Naive thymus-derived CD4-positive, alpha-beta T cell (primary cell): ENCODE measurements at regions of chr2 and their contacts with region 1.

Region 1: GRCh38 chr2:136135921-136136906 is 18.3 kb upstream of the CXCR4 start:
- DNase-seq: peak; percentile 32 to 98 (median 95)
- ATAC-seq: peak; percentile 76
- H3K4me3 ChIP-seq: peak overlapping the region; percentile 15
- H3K4me3 Mint-ChIP-seq: peak overlapping the region; percentile 52 to 92 (median 81)
- H3K27ac ChIP-seq: peak overlapping the region; percentile 99
- H3K27ac Mint-ChIP-seq: peak overlapping the region; percentile 82 to 100 (median 99)
- H3K4me1 ChIP-seq: peaks cover 86 to 87% of the 10 kb centered on the region in 2 donors
- H3K4me1 Mint-ChIP-seq: peaks cover 70 to 100% (median 94%) of the 10 kb centered on the region in 7 donors
- H3K27me3 ChIP-seq: no peaks in the 10 kb centered on the region
- H3K27me3 Mint-ChIP-seq: peaks cover 0 to 50% (median 0%) of the 10 kb centered on the region in 5 donors

Region 2: DNA sequence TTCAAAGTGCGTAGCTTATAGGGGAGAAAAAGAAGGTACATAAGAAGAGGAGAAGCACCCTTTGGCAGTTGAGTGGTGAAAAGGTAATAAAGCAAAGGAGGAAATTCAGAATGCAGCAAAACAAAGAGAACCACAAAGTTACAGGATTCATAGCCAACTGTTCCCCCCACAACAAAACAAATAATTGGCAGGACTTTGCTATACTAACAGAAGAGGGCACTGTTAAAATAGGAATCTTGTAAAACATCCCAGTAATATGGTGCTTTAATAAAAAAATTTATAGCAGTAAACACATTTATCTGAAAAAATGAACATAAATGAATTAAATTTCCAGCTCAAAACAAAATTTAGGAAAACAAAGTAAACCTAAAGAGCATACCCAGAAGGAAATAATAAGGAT is 562.6 kb before region 1 on chr2:
- CTCF ChIA-PET with region 1: no interaction called
- POLR2A ChIA-PET with region 1: no interaction called
- intact Hi-C with region 1: no loop called
- DNase-seq: no peak
- ATAC-seq: no peak
- H3K4me3 ChIP-seq: no peak overlapping the region
- H3K4me3 Mint-ChIP-seq: no peak overlapping the region
- H3K27ac ChIP-seq: no peak overlapping the region
- H3K27ac Mint-ChIP-seq: no peak overlapping the region
- H3K4me1 ChIP-seq: no peaks in the 10 kb centered on the region
- H3K4me1 Mint-ChIP-seq: peaks cover 0 to 9% (median 6%) of the 10 kb centered on the region in 7 donors
- H3K27me3 ChIP-seq: no peaks in the 10 kb centered on the region
- H3K27me3 Mint-ChIP-seq: no peaks in the 10 kb centered on the region

Region 3: GRCh38 chr2:135741395-135742324 is 394.6 kb before region 1 on chr2 and contains the start of gene UBXN4:
- CTCF ChIA-PET with region 1: no interaction called
- POLR2A ChIA-PET with region 1: no interaction called
- intact Hi-C with region 1: loop called (anchors 5 kb)
- DNase-seq: peak; percentile 73 to 93 (median 88)
- ATAC-seq: peak; percentile 95
- H3K4me3 ChIP-seq: peak within 1 kb of the TSS; percentile 88
- H3K4me3 Mint-ChIP-seq: peak within 1 kb of the TSS; percentile 92 to 98 (median 95)
- H3K27ac ChIP-seq: peak within 1 kb of the TSS; percentile 97
- H3K27ac Mint-ChIP-seq: peak within 1 kb of the TSS; percentile 89 to 99 (median 95)
- H3K4me1 ChIP-seq: peaks cover 20 to 22% of the 10 kb centered on the region in 2 donors
- H3K4me1 Mint-ChIP-seq: peaks cover 24 to 47% (median 43%) of the 10 kb centered on the region in 7 donors
- H3K27me3 ChIP-seq: no peaks in the 10 kb centered on the region
- H3K27me3 Mint-ChIP-seq: no peaks in the 10 kb centered on the region
- total RNA-seq, gene UBXN4: 115 to 158 (median 145) TPM

Region 4: GRCh38 chr2:136059036-136059472 is 77.2 kb before region 1 on chr2:
- CTCF ChIA-PET with region 1: no interaction called
- POLR2A ChIA-PET with region 1: interaction called, 9 read pairs
- intact Hi-C with region 1: loop called in 1 of 2 experiments (anchors 1 kb)
- DNase-seq: no peak
- ATAC-seq: no peak
- H3K4me3 ChIP-seq: no peak overlapping the region
- H3K4me3 Mint-ChIP-seq: peak overlapping the region in 2 of 10 donors; percentile 43 to 50
- H3K27ac ChIP-seq: no peak overlapping the region
- H3K27ac Mint-ChIP-seq: peak overlapping the region in 5 of 9 donors; percentile 16 to 90 (median 65)
- H3K4me1 ChIP-seq: peaks cover 43 to 44% of the 10 kb centered on the region in 2 donors
- H3K4me1 Mint-ChIP-seq: peaks cover 46 to 90% (median 80%) of the 10 kb centered on the region in 7 donors
- H3K27me3 ChIP-seq: no peaks in the 10 kb centered on the region
- H3K27me3 Mint-ChIP-seq: no peaks in the 10 kb centered on the region

Region 5: GRCh38 chr2:136178941-136179601 is 42.9 kb after region 1 on chr2:
- CTCF ChIA-PET with region 1: no interaction called
- POLR2A ChIA-PET with region 1: interaction called, 15 read pairs
- intact Hi-C with region 1: loop called in 1 of 2 experiments (anchors 5 kb)
- DNase-seq: no peak
- ATAC-seq: no peak
- H3K4me3 ChIP-seq: no peak overlapping the region
- H3K4me3 Mint-ChIP-seq: no peak overlapping the region
- H3K27ac ChIP-seq: no peak overlapping the region
- H3K27ac Mint-ChIP-seq: peak overlapping the region in 4 of 9 donors; percentile 12 to 57 (median 42)
- H3K4me1 ChIP-seq: peaks cover 4 to 6% of the 10 kb centered on the region in 2 donors
- H3K4me1 Mint-ChIP-seq: peaks cover 8 to 38% (median 20%) of the 10 kb centered on the region in 7 donors
- H3K27me3 ChIP-seq: no peaks in the 10 kb centered on the region
- H3K27me3 Mint-ChIP-seq: peaks cover 0 to 8% (median 0%) of the 10 kb centered on the region in 5 donors

Region 6: GRCh38 chr2:136238286-136239078 is 102.3 kb after region 1 on chr2:
- CTCF ChIA-PET with region 1: interaction called, 7 read pairs
- POLR2A ChIA-PET with region 1: interaction called, 53 read pairs
- intact Hi-C with region 1: loop called (anchors 1 to 2 kb)
- DNase-seq: peak in 8 of 9 donors; percentile 33 to 75 (median 60)
- ATAC-seq: peak; percentile 84
- H3K4me3 ChIP-seq: no peak overlapping the region
- H3K4me3 Mint-ChIP-seq: peak overlapping the region; percentile 26 to 64 (median 48)
- H3K27ac ChIP-seq: peak overlapping the region; percentile 25
- H3K27ac Mint-ChIP-seq: peak overlapping the region; percentile 84 to 95 (median 90)
- H3K4me1 ChIP-seq: peaks cover 31 to 36% of the 10 kb centered on the region in 2 donors
- H3K4me1 Mint-ChIP-seq: peaks cover 32 to 60% (median 54%) of the 10 kb centered on the region in 7 donors
- H3K27me3 ChIP-seq: no peaks in the 10 kb centered on the region
- H3K27me3 Mint-ChIP-seq: no peaks in the 10 kb centered on the region

Region 7: GRCh38 chr2:136327162-136327852 is 191.1 kb after region 1 on chr2:
- CTCF ChIA-PET with region 1: interaction called, 5 read pairs
- POLR2A ChIA-PET with region 1: interaction called, 76 read pairs
- intact Hi-C with region 1: loop called (anchors 1 kb)
- DNase-seq: peak; percentile 28 to 90 (median 83)
- ATAC-seq: peak; percentile 93
- H3K4me3 ChIP-seq: peak overlapping the region; percentile 38
- H3K4me3 Mint-ChIP-seq: peak overlapping the region; percentile 74 to 89 (median 82)
- H3K27ac ChIP-seq: peak overlapping the region; percentile 74
- H3K27ac Mint-ChIP-seq: peak overlapping the region; percentile 93 to 99 (median 97)
- H3K4me1 ChIP-seq: peaks cover 17 to 44% of the 10 kb centered on the region in 2 donors
- H3K4me1 Mint-ChIP-seq: peaks cover 43 to 73% (median 62%) of the 10 kb centered on the region in 7 donors
- H3K27me3 ChIP-seq: no peaks in the 10 kb centered on the region
- H3K27me3 Mint-ChIP-seq: no peaks in the 10 kb centered on the region